Activated CD4-positive, alpha-beta T cell treated with anti-CD3 and anti-CD28 coated beads for 36 hours (primary cell): ENCODE measurements at regions of chr9 and their contacts with region 1.

Region 1: DNA sequence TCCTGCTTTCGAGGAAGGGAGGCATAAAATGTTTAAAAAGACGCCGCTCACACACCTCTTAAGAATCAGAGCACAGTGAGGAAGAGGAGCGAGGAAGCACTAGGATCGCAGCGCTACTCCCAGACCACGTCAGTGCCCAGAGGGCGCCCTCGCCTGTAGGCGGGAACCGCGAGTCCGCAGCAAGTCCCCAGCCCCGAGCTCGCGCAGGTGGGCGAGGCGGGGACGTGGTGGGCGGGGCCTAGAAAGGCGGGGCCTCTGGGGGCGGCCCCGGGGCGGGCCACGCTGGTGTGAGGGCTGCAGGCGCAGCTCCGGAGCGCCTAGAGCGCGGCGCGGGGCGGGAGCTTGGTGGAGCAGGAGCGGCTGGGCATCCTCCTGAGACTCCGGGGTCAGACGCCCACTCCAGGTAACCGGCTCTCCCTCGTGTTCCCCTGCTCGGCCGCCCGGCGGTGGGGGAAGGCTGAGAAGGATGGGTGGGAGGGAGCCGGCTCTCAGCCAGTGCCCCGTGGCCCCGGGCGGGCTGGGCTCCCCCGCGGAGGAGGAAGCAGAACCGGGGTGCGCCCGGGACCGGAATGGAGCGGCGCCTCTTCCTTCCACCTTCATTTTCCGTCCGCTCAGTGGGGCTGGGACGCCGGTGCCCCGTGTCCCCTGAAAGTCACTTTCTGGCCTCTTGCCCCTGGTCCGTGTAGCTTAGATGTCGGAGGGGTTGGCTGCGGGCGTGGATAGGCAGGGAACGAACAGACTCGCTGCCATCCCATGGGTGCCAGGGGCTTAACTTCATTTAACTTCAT is at the start of gene GCNT1:
- DNase-seq: peak; percentile 95
- ATAC-seq: peak; percentile 96
- H3K4me3 Mint-ChIP-seq: peak within 1 kb of the TSS; percentile 85
- H3K27ac Mint-ChIP-seq: peak within 1 kb of the TSS; percentile 77
- H3K4me1 Mint-ChIP-seq: peaks cover 26% of the 10 kb centered on the region
- H3K27me3 Mint-ChIP-seq: no peaks in the 10 kb centered on the region
- total RNA-seq, gene GCNT1: 4.2 to 4.6 TPM

Region 2: GRCh38 chr9:76403352-76403751 is 55.7 kb before region 1 on chr9:
- CTCF ChIA-PET with region 1: interaction called, 3 read pairs
- POLR2A ChIA-PET with region 1: no interaction called
- intact Hi-C with region 1: loop called in 1 of 2 experiments (anchors 1 kb)
- DNase-seq: peak; percentile 30
- ATAC-seq: peak; percentile 94
- H3K4me3 Mint-ChIP-seq: peak overlapping the region; percentile 16
- H3K27ac Mint-ChIP-seq: peak overlapping the region; percentile 62
- H3K4me1 Mint-ChIP-seq: peaks cover 11% of the 10 kb centered on the region
- H3K27me3 Mint-ChIP-seq: no peaks in the 10 kb centered on the region

Region 3: GRCh38 chr9:76419782-76420380 is 39.2 kb before region 1 on chr9:
- CTCF ChIA-PET with region 1: no interaction called
- POLR2A ChIA-PET with region 1: no interaction called
- intact Hi-C with region 1: no loop called
- DNase-seq: no peak
- ATAC-seq: no peak
- H3K4me3 Mint-ChIP-seq: no peak overlapping the region
- H3K27ac Mint-ChIP-seq: no peak overlapping the region
- H3K4me1 Mint-ChIP-seq: peaks cover 22% of the 10 kb centered on the region
- H3K27me3 Mint-ChIP-seq: peaks cover 2% of the 10 kb centered on the region

Region 4: DNA sequence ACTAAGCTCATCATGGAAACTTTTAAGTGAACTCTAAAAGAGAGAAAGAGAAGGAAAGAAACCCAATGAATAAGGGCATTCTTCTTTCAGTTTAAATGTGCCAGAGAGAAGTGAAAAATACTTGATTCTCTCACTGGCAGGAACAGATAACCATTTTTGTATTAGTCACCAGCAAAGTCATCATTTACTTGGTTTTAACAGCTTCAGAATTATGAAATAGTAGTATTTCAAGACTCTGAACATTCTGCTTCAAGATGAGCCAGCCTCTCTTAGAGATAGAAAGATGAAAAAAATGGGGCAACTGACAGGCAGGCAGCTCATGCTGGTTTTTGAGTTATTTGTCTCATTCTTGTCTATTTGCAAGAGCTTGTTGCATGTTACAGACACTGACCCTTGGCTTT is 103.4 kb after region 1 on chr9:
- CTCF ChIA-PET with region 1: no interaction called
- POLR2A ChIA-PET with region 1: interaction called, 3 read pairs
- intact Hi-C with region 1: loop called in 1 of 2 experiments (anchors 5 kb)
- DNase-seq: no peak
- ATAC-seq: peak; percentile 91
- H3K4me3 Mint-ChIP-seq: no peak overlapping the region
- H3K27ac Mint-ChIP-seq: no peak overlapping the region
- H3K4me1 Mint-ChIP-seq: peaks cover 19% of the 10 kb centered on the region
- H3K27me3 Mint-ChIP-seq: peaks cover 15% of the 10 kb centered on the region

Region 5: GRCh38 chr9:76576344-76576743 is 117.2 kb after region 1 on chr9:
- CTCF ChIA-PET with region 1: interaction called, 3 read pairs
- POLR2A ChIA-PET with region 1: interaction called, 3 read pairs
- intact Hi-C with region 1: loop called in 1 of 2 experiments (anchors 5 kb)
- DNase-seq: peak; percentile 87
- ATAC-seq: peak; percentile 94
- H3K4me3 Mint-ChIP-seq: no peak overlapping the region
- H3K27ac Mint-ChIP-seq: peak overlapping the region; percentile 48
- H3K4me1 Mint-ChIP-seq: peaks cover 16% of the 10 kb centered on the region
- H3K27me3 Mint-ChIP-seq: peaks cover 30% of the 10 kb centered on the region

Region 6: DNA sequence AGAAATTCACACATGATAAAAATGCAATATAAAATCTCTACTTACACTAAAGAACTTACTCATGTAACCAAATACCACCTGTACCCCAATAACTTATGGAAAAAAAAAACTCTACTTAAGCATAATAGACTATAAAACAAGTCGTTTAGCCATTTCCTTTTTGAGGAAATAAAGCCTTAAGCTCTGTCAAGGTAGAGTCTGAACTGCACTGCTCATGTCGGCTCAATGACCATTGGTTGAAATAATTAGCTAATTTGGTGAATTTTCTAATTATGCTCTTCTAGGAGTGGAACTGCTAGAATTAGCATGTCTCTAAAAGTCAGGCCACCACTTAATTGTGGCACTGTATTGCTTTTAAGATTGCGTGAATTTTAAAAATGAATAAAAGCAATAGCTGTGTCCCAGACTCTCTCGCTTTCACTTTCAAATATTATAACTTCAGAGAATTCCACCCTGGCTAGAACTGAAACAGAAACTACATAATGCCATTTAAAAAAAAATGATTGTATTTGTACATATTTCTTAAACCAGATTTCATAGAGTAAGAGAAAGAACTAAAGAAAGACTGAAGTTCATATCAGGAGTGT is 192.1 kb after region 1 on chr9:
- CTCF ChIA-PET with region 1: no interaction called
- POLR2A ChIA-PET with region 1: no interaction called
- intact Hi-C with region 1: loop called in 1 of 2 experiments (anchors 1 kb)
- DNase-seq: no peak
- ATAC-seq: peak; percentile 60
- H3K4me3 Mint-ChIP-seq: peak overlapping the region; percentile 33
- H3K27ac Mint-ChIP-seq: no peak overlapping the region
- H3K4me1 Mint-ChIP-seq: peaks cover 26% of the 10 kb centered on the region
- H3K27me3 Mint-ChIP-seq: no peaks in the 10 kb centered on the region

Region 7: GRCh38 chr9:76691517-76692313 is 232.6 kb after region 1 on chr9:
- CTCF ChIA-PET with region 1: no interaction called
- POLR2A ChIA-PET with region 1: no interaction called
- intact Hi-C with region 1: no loop called
- DNase-seq: no peak
- ATAC-seq: peak; percentile 33
- H3K4me3 Mint-ChIP-seq: peak overlapping the region; percentile 47
- H3K27ac Mint-ChIP-seq: peak overlapping the region; percentile 33
- H3K4me1 Mint-ChIP-seq: peaks cover 17% of the 10 kb centered on the region
- H3K27me3 Mint-ChIP-seq: peaks cover 32% of the 10 kb centered on the region

Region 8: GRCh38 chr9:77177161-77177893 is 718.2 kb after region 1 on chr9 and contains the start of gene VPS13A:
- CTCF ChIA-PET with region 1: no interaction called
- POLR2A ChIA-PET with region 1: no interaction called
- intact Hi-C with region 1: loop called in 1 of 2 experiments (anchors 2 kb)
- DNase-seq: peak; percentile 98
- ATAC-seq: peak; percentile 92
- H3K4me3 Mint-ChIP-seq: peak within 1 kb of the TSS; percentile 97
- H3K27ac Mint-ChIP-seq: peak within 1 kb of the TSS; percentile 93
- H3K4me1 Mint-ChIP-seq: peaks cover 23% of the 10 kb centered on the region
- H3K27me3 Mint-ChIP-seq: no peaks in the 10 kb centered on the region
- total RNA-seq, gene VPS13A: 33.3 to 33.6 TPM